SK-N-SH (cell line): ENCODE measurements at regions of chr3 and their contacts with region 1.

Region 1: GRCh38 chr3:138915503-138916498 is 31.1 kb downstream of the FOXL2 start:
- DNase-seq: peak; percentile 93
- H3K4me3 ChIP-seq: peak overlapping the region; percentile 64 to 91
- H3K27ac ChIP-seq: peak overlapping the region in 1 of 2 experiments; percentile 76; a peak in 2 of 4 replicates
- H3K4me1 ChIP-seq: peaks cover 0 to 3% of the 10 kb centered on the region in 2 experiments; a peak in 1 of 4 replicates
- H3K27me3 ChIP-seq: no peaks in the 10 kb centered on the region
- CTCF ChIP-seq: peak; percentile 82
- EP300 ChIP-seq: no peak
- RAD21 ChIP-seq: peak; percentile 65

Region 2: DNA sequence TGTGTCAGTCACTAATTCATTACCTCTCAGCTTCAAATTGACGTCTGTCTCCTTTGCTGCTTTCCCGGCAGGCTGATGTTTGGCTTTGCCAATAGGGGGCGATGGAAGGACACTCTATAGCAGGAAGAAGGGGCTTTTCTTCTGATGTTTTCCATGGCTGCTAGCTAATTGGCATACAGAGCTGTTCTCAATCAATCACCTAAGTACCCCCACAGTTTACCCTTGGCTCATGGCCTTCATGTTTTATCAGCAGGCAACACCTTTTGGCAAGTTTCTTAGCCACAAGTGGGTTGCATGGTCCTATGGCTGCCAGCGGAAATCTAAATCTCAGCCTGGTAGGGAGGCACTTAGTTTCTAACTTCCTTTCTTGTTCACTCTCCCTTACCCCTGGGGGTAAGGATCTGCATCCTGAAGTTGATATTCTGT is 436.4 kb before region 1 on chr3:
- CTCF ChIA-PET with region 1: interaction called, 81 read pairs
- POLR2A ChIA-PET with region 1: no interaction called
- DNase-seq: peak; percentile 69
- H3K4me3 ChIP-seq: no peak overlapping the region; a peak in 1 of 4 replicates
- H3K27ac ChIP-seq: no peak overlapping the region
- H3K4me1 ChIP-seq: no peaks in the 10 kb centered on the region
- H3K27me3 ChIP-seq: no peaks in the 10 kb centered on the region
- CTCF ChIP-seq: peak; percentile 87
- EP300 ChIP-seq: no peak
- RAD21 ChIP-seq: peak; percentile 78

Region 3: DNA sequence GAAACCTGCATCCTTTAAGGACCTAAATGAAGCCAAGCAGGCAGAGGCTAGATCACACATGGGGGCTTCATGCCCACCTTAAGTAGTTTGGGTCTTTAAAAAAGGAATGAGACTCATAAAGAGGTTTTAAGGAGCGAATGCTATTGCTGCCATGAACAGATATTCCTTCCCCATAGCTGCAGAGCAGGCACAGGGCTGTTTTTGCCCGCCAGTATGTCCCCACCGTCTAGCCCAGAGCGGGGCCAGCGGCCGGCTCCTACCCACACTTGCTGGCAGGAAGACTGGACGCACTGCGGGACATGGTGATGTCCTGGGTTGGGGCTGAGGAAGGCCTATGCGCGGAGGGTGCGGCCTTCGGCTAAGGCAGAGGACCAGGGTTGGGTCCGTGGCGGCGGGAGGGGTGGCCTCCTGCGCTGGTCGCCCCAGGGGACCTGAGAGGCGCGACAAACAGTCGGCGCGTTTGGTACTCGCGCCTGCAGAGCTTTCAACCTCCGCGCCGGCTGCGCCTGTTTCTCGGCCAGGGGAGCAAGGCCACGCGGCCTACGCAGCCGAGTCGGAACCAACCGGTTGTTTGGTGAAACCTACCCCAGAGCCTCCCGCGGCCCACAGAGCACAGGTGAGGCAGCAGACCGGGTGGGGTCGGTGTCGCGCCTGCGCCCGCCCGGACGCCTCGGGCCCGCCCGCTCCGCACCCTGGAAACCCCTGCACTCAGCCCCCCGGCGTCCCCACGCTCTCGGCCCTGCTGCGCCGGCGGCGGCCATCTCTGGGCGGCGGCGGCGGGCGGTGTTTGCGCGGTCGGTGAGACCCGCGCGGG is 307.3 kb before region 1 on chr3 and contains the start of gene FAIM:
- CTCF ChIA-PET with region 1: interaction called, 14 read pairs
- POLR2A ChIA-PET with region 1: no interaction called
- DNase-seq: peak; percentile 86
- H3K4me3 ChIP-seq: peak within 1 kb of the TSS; percentile 57 to 71
- H3K27ac ChIP-seq: peak within 1 kb of the TSS; percentile 50 to 87
- H3K4me1 ChIP-seq: peaks cover 0 to 5% of the 10 kb centered on the region in 2 experiments; a peak in 1 of 4 replicates
- H3K27me3 ChIP-seq: no peaks in the 10 kb centered on the region
- CTCF ChIP-seq: no peak
- EP300 ChIP-seq: no peak
- RAD21 ChIP-seq: no peak
- polyA plus RNA-seq, gene FAIM: 3.0 and 3.1 TPM in 2 replicates

Region 4: GRCh38 chr3:138694287-138695007 is 221.4 kb before region 1 on chr3:
- CTCF ChIA-PET with region 1: interaction called, 298 read pairs
- POLR2A ChIA-PET with region 1: interaction called, 3 read pairs
- DNase-seq: no peak
- H3K4me3 ChIP-seq: no peak overlapping the region
- H3K27ac ChIP-seq: peak overlapping the region in 1 of 2 experiments; percentile 42; a peak in 2 of 4 replicates
- H3K4me1 ChIP-seq: peaks cover 0 to 4% of the 10 kb centered on the region in 2 experiments; a peak in 1 of 4 replicates
- H3K27me3 ChIP-seq: no peaks in the 10 kb centered on the region
- CTCF ChIP-seq: no peak
- EP300 ChIP-seq: peak in 1 of 2 experiments; percentile 91; a peak in 2 of 4 replicates
- RAD21 ChIP-seq: no peak

Region 5: DNA sequence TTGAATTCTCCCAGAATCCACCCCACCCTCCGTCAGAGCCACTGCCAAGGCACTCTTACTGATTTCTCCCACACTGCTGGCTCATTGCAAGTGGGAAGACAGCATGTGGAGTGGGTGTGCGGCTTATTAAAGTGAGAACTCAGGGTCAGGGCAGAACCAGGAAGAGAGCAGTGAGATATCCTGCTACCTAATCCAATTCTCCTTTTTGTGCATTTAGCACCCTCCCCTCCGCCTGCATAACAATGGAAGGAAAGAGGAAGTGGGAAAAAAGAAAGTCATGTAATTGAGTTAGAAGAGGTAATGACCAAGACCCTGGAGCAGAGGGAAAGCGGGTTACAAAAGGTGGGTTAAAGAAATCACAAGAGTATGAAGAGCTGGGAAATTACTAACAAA is 53.3 kb before region 1 on chr3:
- CTCF ChIA-PET with region 1: interaction called, 20 read pairs
- POLR2A ChIA-PET with region 1: no interaction called
- DNase-seq: no peak
- H3K4me3 ChIP-seq: no peak overlapping the region
- H3K27ac ChIP-seq: no peak overlapping the region
- H3K4me1 ChIP-seq: peaks cover 0 to 17% of the 10 kb centered on the region in 2 experiments; a peak in 1 of 4 replicates
- H3K27me3 ChIP-seq: no peaks in the 10 kb centered on the region
- CTCF ChIP-seq: no peak
- EP300 ChIP-seq: no peak
- RAD21 ChIP-seq: no peak

Region 6: DNA sequence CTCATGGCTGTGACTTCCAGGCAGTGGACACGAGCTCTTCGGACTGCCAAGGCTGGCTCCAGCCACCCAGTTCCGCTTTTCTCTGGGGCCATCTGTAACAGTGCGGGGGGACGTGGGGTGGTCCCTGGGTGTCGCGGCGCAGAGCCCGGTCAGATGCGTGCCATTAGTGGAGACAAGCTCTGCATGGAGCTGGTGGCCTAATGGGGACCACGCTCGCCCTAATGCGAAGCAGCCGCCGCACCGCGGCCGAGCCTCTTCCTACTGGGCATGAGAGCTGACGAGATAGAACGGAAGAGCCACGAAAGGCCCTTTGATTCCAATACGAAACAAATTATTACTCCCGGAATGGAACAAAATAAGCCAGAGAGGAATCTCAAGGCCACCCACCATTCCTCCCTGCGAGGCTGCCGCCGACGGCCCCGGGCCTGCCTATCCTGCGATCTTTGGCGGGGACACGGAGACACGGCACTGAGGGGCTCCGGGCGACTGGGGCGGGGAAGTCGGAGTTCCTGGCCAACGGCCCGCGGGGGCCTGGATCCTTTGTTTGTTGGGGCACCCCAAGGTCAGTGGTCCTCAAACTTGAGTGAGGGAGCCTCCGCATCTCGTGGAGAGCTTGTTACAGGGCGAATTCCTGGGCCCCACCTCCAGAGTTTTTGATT is 13.1 kb after region 1 on chr3:
- CTCF ChIA-PET with region 1: interaction called, 28 read pairs
- POLR2A ChIA-PET with region 1: interaction called, 3 read pairs
- DNase-seq: no peak
- H3K4me3 ChIP-seq: no peak overlapping the region
- H3K27ac ChIP-seq: no peak overlapping the region
- H3K4me1 ChIP-seq: no peaks in the 10 kb centered on the region
- H3K27me3 ChIP-seq: peaks cover 19% of the 10 kb centered on the region; the same call in 1 of the 2 replicates
- CTCF ChIP-seq: no peak
- EP300 ChIP-seq: no peak
- RAD21 ChIP-seq: no peak